MCF 10A (cell line): ENCODE measurements at regions of chr5 and their contacts with region 1.

Region 1: DNA sequence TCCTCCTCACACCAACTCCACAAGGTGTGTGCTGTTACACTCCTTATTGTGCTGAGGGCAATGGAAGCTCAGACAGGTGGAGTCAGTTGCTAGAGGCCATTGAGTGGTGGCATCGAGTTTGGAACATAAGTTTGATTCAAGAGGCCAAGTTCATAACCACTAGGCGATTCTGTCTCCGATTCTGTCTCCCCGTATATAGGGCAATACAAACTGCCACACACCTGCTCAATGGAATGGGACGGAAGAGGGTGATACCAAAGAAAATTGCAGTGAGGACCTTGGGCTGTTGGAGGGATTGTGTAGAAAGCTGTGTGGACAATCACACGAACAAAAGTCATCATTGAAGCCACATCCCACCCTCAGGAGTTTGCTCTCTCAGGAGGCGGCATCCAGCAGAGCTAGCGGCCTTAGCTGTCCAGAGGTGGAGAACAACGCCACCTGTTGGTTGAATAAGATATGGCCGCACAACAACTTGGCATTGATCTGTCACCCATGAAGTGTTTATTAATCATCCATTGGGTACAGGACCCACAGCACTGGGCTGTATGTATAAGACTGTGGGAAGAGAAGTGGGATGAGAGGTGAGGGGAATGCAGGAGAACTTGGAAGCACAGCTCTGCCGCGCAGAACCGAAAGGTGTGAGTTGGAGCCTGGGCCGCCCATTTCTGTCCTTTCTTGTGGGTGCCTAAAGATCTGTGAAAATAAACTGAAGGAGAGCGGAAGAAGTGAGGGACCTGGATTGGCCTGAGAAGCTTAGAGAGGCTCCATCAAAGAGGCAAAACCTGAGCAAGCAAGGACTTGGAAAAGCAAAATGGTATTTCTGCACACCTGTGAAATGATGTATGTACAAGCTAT is 16.1 kb upstream of the NEUROG1 start:
- DNase-seq: peak; percentile 87
- H3K4me3 Mint-ChIP-seq: no peak overlapping the region
- H3K27ac Mint-ChIP-seq: no peak overlapping the region
- H3K4me1 Mint-ChIP-seq: peaks cover 5% of the 10 kb centered on the region
- H3K27me3 Mint-ChIP-seq: peaks cover 25% of the 10 kb centered on the region
- CTCF ChIP-seq: peak; percentile 97

Region 2: DNA sequence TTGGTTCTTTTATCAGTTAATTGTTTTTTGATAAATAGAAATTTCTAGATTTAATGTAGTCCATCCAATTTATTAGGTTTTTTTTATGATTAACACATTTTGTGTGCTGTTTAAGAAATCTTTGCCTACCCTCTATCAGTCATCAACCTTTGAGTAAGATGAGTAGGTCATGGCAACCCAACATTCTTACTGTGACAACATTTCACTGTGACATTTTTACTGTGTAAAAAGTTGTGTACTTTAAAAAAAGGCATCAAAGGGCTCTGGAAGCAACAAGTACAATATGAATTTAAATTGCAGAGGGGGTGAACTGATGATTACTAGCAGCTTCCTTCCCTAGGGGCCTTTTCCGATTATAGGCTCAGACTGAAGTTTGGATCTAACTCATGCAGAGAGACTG is 141.5 kb before region 1 on chr5:
- CTCF ChIA-PET with region 1: no interaction called
- POLR2A ChIA-PET with region 1: no interaction called
- intact Hi-C with region 1: no loop called
- DNase-seq: no peak
- H3K4me3 Mint-ChIP-seq: no peak overlapping the region
- H3K27ac Mint-ChIP-seq: no peak overlapping the region
- H3K4me1 Mint-ChIP-seq: no peaks in the 10 kb centered on the region
- H3K27me3 Mint-ChIP-seq: peaks cover 55% of the 10 kb centered on the region
- CTCF ChIP-seq: no peak

Region 3: DNA sequence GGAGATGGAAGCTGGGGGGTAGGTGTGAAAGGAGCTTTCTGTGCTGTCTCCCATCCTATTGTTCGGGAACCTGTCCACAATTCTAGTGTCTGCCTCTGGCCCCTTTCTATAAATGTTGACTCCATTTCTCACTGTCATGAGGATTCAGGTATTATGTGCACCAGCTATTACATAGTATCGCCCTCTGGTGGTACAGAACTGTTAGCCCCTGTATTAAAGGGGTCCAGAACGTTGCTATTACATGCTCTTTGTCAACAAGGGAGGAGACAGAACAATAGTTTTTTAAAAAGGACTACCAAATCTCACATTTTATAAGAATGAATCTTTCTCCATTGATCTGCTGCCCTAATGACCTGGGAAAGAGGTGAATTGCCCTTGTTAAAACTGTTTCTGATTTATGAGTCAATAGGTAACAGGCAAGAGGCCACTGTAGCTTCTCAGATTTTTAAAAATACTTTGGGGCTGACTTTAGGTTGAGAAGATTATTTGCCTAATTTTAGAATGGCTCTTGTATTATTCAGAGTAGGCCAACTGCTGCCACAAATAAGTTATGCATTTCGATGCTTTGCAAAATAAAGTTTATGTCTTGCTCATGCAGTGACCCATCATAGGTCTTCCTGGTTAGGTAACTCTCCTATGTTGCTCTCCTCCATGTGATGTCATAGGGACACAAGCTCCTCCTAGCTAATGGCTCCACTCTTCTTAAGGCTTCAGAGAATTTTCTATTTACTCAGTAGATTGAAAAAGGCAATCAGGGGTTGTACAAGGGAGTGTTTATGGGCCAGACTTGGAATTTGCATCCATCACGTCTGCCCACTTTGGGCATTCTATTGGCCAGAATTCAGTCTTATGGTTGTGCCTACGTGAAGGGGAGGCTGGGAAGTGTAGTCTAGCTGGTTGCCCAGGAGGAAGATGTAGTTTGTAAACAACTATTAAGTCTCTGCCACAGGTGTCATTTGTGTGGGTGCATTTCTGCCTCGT is 125.4 kb before region 1 on chr5:
- CTCF ChIA-PET with region 1: interaction called, 15 read pairs
- POLR2A ChIA-PET with region 1: interaction called, 4 read pairs
- intact Hi-C with region 1: no loop called
- DNase-seq: peak; percentile 82
- H3K4me3 Mint-ChIP-seq: no peak overlapping the region
- H3K27ac Mint-ChIP-seq: no peak overlapping the region
- H3K4me1 Mint-ChIP-seq: no peaks in the 10 kb centered on the region
- H3K27me3 Mint-ChIP-seq: peaks cover 9% of the 10 kb centered on the region
- CTCF ChIP-seq: peak; percentile 81

Region 4: DNA sequence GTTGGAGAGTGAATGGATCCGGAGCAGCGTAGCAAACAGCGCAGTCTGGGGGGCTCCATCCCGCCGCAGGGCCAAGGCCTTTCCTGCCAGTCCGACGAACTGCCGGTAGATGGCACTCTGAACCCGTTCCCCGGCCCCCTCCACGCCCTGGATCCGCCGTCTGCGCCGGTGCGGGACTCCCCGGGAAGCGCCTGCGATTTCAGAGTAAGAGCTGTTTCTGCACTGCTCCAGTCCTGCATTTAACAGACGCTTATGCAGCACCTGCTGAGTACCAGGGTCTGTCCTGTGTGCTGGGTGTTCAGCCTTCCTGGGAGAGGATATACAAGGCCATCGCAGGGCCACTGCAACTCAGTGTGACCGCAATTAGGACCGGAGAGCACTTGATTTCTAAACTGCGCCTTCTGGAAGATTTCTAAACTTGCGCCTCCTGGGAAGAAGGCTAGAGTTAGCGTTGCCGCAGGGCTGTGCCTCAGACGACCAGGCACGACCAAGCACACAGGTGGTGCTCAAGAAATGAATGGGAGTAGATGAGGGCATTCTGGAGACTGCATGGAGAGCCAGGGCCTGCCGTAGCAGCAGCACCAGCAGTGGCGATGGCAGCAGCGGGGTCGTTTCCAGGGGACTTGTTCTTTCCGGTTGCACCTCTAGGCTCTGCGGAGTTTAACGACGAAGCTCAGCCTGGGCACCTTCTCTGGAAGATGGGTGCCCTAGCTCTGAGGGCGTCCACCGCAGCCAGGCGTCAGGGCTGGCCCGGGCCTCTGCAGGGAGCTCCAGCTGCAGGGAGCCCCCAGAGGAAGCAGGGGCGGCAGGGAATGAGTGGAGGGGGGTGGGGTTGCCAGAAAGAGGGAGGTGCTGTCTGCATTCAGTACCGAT is 85.4 kb before region 1 on chr5:
- CTCF ChIA-PET with region 1: interaction called, 2,166 read pairs
- POLR2A ChIA-PET with region 1: interaction called, 88 read pairs
- intact Hi-C with region 1: loop called (anchors 1 kb)
- DNase-seq: peak; percentile 78
- H3K4me3 Mint-ChIP-seq: no peak overlapping the region
- H3K27ac Mint-ChIP-seq: no peak overlapping the region
- H3K4me1 Mint-ChIP-seq: peaks cover 5% of the 10 kb centered on the region
- H3K27me3 Mint-ChIP-seq: peaks cover 12% of the 10 kb centered on the region
- CTCF ChIP-seq: peak; percentile 99

Region 5: GRCh38 chr5:135501965-135502364 is 49.9 kb before region 1 on chr5:
- CTCF ChIA-PET with region 1: interaction called, 54 read pairs
- POLR2A ChIA-PET with region 1: interaction called, 4 read pairs
- intact Hi-C with region 1: no loop called
- DNase-seq: no peak
- H3K4me3 Mint-ChIP-seq: no peak overlapping the region
- H3K27ac Mint-ChIP-seq: no peak overlapping the region
- H3K4me1 Mint-ChIP-seq: peaks cover 25% of the 10 kb centered on the region
- H3K27me3 Mint-ChIP-seq: no peaks in the 10 kb centered on the region
- CTCF ChIP-seq: no peak

Region 6: GRCh38 chr5:135535820-135536801 is 15.7 kb before region 1 on chr5 and contains the start of gene NEUROG1:
- CTCF ChIA-PET with region 1: interaction called, 104 read pairs
- POLR2A ChIA-PET with region 1: no interaction called
- intact Hi-C with region 1: no loop called
- DNase-seq: no peak
- H3K4me3 Mint-ChIP-seq: no peak within 1 kb of the TSS
- H3K27ac Mint-ChIP-seq: no peak within 1 kb of the TSS
- H3K4me1 Mint-ChIP-seq: no peaks in the 10 kb centered on the region
- H3K27me3 Mint-ChIP-seq: no peaks in the 10 kb centered on the region
- CTCF ChIP-seq: no peak
- total RNA-seq, gene NEUROG1: not detected in 2 replicates

Region 7: DNA sequence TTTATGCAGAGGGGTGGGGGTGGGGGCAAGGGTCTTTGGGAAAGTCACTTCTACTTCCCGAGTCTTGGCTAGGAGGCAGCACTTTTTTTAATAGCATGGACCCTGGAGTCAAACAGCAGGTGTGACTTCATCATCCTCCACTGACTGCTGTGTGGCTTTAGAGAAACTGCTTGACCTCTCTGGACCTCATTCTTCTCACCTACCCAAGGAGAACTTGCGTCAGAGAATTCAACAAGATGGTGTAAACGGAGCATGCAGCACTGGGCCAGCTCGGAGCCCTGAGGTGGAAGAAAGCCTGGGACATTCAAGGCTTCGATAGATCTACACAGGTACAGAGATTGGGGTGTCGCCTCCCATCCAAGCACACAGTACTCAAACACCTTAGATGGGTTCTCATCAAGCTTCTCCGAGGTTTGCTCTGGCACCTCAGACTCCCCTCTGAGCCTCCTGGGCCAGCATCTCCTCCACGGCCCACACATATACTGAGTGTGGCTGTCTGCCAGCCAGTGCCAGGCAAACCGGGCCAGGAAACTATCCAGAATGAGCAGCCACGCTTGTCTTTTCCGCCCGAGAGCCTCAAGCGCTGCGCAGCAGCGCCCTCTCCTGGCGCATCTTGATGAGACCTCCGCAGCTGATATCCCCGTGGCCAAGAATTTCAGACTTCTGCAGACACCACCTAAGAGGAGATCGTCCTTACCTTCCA is 278.0 kb after region 1 on chr5:
- CTCF ChIA-PET with region 1: interaction called, 163 read pairs
- POLR2A ChIA-PET with region 1: interaction called, 4 read pairs
- intact Hi-C with region 1: loop called (anchors 1 kb)
- DNase-seq: peak; percentile 83
- H3K4me3 Mint-ChIP-seq: no peak overlapping the region
- H3K27ac Mint-ChIP-seq: no peak overlapping the region
- H3K4me1 Mint-ChIP-seq: peaks cover 5% of the 10 kb centered on the region
- H3K27me3 Mint-ChIP-seq: peaks cover 50% of the 10 kb centered on the region
- CTCF ChIP-seq: peak; percentile 96